ENCODE measurements at regions of chr3 and their contacts with region 1.

Region 1: DNA sequence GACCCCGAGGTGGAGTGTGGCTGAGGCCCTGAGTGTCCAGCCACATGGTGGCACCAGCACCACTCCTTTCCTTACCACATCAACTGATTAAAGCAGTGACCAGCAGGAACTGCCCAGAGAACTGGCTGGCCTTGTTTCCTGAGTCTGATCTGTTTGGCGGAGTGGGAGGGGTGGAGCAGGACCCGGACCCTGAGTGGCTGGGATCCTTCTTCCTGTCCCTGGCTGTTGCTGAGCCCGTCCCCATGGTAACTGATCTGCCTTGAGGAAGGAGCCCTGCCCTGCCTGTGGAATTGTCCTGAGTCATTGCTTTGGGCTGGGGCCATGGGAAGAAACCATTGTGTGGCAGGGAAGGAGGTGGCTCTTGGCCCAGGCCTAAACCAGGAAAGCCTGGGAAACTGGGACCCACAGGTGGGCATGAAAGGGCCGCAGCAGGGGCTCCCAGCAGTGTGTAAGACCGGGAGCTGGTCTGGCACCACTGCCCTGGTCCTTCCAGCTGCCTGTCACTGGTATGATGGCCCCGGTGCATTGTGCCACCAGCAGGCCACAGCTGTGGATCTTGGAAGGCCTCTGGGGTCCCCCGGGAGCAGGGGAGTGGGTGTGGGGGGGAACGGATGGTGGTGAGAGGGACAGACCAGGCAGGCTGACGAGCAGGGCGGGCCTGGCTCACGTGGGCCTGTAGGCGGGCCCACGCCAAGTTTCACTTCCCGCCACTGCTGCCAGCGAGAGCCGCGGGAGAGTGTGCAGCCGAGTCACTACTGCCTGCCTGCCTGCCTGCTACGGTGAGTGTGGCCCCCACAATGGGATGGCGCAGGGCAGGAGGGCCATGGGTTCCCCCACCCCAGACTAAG is 19.2 kb downstream of the ATRIP start:
- DNase-seq: peak; percentile 97

Region 2: DNA sequence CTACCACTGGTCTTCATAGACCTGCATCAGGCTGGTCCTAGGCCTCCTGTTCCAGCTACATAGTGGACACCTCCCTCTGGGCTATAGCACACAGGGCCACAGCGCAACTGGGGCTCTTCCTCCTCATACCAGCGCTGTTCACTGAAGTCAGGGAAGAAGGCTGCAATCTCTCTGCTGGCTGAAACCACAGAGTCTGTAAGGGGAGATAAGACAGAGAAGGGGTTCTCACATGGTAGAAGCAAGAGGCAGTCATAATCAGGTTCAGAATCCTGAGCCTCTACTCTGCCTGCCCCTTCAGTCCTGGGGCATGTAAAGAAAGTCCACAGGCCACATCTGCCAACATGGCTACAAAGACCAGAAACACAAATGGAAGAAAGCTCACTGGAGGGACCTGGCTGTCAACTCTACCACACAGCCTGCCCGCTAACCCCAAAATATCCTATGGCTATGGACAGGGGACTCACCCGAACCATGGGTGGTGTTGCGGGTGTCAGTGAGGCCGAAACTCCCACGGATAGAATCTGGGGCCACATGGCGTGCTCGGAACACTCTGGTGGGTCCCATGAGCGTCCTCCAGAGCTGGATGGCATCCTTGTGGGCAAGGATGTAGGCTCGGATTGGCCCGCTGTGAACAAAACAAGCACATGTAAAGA is 171.0 kb before region 1 on chr3:
- intact Hi-C with region 1: no loop called
- DNase-seq: no peak

Region 3: DNA sequence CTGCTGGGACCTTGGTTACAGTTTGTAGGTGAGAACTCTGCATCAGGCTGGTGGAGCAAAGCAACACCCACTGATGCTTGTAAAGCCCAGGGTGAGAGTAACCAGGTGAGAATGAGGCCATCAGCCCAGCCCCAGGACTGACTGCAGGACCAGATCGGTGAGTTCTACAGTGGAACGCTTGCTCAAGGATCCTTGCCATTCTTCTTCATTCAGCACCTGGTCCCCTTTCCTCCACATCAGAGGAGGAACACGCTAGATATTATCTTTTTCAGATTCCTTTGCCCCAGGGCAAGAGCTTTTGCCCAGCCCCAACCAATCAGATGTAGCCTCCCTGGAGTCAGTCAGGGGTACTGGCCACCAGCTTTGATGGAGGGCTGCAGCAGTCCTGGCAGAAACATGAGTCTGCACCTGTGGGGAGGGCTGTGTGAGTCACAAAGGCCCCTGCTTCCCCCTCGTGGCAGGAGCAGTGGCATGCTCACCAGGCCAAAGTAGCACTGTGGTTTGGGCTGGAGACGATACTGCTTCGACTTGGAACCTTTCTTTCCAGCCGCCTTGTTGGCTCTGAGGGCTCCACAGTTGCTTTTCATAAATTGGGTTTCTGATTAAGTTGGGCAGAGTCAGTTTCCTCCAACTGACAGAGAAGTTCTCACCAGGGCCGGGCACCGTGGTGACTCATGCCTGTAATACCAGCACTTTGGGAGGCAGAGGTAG is 41.8 kb after region 1 on chr3:
- intact Hi-C with region 1: loop called (anchors 1 kb)
- DNase-seq: no peak